ENCODE measurements at regions of chr14 and their contacts with region 1.

Region 1: GRCh38 chr14:104137297-104138097 is 890 bp upstream of the KIF26A start:
- DNase-seq: peak; percentile 67 to 80
- ATAC-seq: peak; percentile 80 to 89 (median 84)
- H3K4me3 ChIP-seq: peak overlapping the region; percentile 19 to 72 (median 64)
- H3K27ac ChIP-seq: peak overlapping the region; percentile 41 to 90 (median 84)
- H3K4me1 ChIP-seq: peaks cover 15 to 59% (median 40%) of the 10 kb centered on the region in 9 donors
- H3K27me3 ChIP-seq: peaks cover 11 to 82% (median 50%) of the 10 kb centered on the region in 7 donors
- CTCF ChIP-seq: peak; percentile 87 to 98 (median 92)

Region 2: GRCh38 chr14:104184911-104185499 is 47.5 kb after region 1 on chr14:
- intact Hi-C with region 1: loop called in 3 of 10 experiments (anchors 2 to 5 kb)
- DNase-seq: peak; percentile 71 to 74
- ATAC-seq: peak; percentile 62 to 86 (median 78)
- H3K4me3 ChIP-seq: no peak overlapping the region
- H3K27ac ChIP-seq: peak overlapping the region; percentile 54 to 88 (median 76)
- H3K4me1 ChIP-seq: peaks cover 3 to 49% (median 8%) of the 10 kb centered on the region in 9 donors
- H3K27me3 ChIP-seq: peaks cover 0 to 3% (median 0%) of the 10 kb centered on the region in 7 donors
- CTCF ChIP-seq: no peak

Region 3: DNA sequence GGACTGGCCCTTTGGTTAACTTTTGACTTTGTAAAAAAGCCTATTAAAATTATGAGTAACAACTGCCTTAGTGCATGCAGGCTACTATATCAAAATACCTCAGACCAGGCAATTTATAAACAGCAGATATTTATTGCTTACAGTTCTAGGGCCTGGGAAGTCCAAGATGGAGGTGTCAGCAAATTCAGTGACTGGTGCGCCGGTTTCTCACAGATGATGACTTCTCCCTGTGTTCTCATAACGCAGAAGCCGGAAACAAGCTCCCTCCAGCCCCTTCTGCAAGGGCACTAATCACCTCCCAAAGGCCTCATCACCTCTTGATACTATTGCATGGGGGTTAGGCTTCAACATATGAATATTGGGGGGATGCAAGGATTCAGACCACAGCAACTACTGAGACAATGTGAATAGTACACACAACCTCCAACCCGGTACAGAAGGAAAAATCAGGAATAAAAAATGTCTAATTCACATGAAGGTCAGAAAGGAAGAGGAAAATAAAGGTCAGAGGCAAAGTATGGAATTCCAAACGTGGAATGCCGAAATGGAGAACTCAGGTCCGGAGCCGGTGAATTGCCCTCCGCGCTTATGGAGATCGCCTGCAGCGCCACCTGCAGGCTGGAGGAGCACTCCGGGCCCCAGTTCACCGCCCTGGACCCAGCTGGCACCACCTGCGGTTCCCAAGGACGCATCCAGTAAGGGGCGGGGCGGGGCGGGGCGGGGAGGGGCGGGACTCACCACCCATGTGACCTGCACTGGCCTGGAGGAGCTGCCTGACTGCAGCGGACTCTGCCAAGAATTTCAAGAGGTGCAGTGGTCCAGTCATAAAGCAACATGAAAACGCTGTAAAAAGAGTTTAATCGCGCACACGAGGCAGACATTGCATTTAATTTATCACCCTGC is 204.3 kb after region 1 on chr14:
- intact Hi-C with region 1: loop called in 1 of 10 experiments (anchors 5 kb)
- DNase-seq: peak in 1 of 2 donors; percentile 58
- ATAC-seq: peak; percentile 77 to 90 (median 85)
- H3K4me3 ChIP-seq: no peak overlapping the region
- H3K27ac ChIP-seq: no peak overlapping the region
- H3K4me1 ChIP-seq: peaks cover 0 to 5% (median 0%) of the 10 kb centered on the region in 9 donors
- H3K27me3 ChIP-seq: peaks cover 0 to 27% (median 11%) of the 10 kb centered on the region in 7 donors
- CTCF ChIP-seq: peak; percentile 35 to 64 (median 53)

Region 4: DNA sequence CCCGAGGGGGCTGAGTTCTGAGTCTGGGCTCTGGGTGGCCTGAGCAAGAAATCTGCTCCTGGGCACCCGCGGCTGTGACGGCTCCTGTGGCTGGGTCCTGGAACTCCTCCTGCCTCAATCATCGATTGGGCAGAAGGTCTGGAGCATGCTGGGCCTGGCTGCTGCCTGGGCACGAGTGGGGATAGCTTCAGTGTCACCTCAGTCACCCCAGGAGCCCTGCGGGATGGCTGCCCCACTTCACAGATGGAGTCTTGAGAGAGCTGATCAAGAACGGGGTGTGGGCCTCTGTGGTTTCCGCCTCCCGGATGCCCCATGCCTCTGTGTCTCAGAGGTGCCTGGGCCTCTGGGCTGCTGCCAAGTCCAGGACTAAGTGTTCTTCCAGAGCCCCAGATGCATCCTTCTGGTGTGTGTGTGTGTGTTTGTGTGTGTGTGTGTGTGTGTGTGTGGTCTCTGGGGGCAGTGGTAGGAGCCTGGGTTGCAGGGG is 256.4 kb after region 1 on chr14:
- intact Hi-C with region 1: loop called in 1 of 10 experiments (anchors 10 kb)
- DNase-seq: peak; percentile 78 to 84
- ATAC-seq: peak; percentile 70 to 96 (median 90)
- H3K4me3 ChIP-seq: no peak overlapping the region
- H3K27ac ChIP-seq: peak overlapping the region; percentile 55 to 89 (median 82)
- H3K4me1 ChIP-seq: peaks cover 13 to 54% (median 32%) of the 10 kb centered on the region in 9 donors
- H3K27me3 ChIP-seq: peaks cover 0 to 5% (median 0%) of the 10 kb centered on the region in 7 donors
- CTCF ChIP-seq: no peak

Region 5: GRCh38 chr14:104563742-104564615 is 426.5 kb after region 1 on chr14:
- intact Hi-C with region 1: loop called (anchors 1 to 5 kb)
- DNase-seq: peak; percentile 77 to 80
- ATAC-seq: peak; percentile 72 to 92 (median 85)
- H3K4me3 ChIP-seq: no peak overlapping the region
- H3K27ac ChIP-seq: no peak overlapping the region
- H3K4me1 ChIP-seq: peaks cover 3 to 29% (median 14%) of the 10 kb centered on the region in 9 donors
- H3K27me3 ChIP-seq: peaks cover 0 to 36% (median 22%) of the 10 kb centered on the region in 7 donors
- CTCF ChIP-seq: peak; percentile 66 to 92 (median 88)

Measured in heart right ventricle (tissue), 16 donors.